ENCODE measurements at regions of chr10 and their contacts with region 1.

Region 1: GRCh38 chr10:4131407-4132228 is 346.6 kb upstream of the KLF6 start:
- DNase-seq: peak; percentile 86
- H3K4me3 ChIP-seq: peak overlapping the region in 1 of 3 experiments; percentile 47
- H3K27ac ChIP-seq: peak overlapping the region; percentile 92
- H3K4me1 ChIP-seq: peaks cover 48% of the 10 kb centered on the region
- H3K27me3 ChIP-seq: no peaks in the 10 kb centered on the region
- CTCF ChIP-seq: no peak
- POLR2A ChIP-seq: no peak

Region 2: GRCh38 chr10:3811291-3811870 is 320.2 kb before region 1 on chr10:
- CTCF ChIA-PET with region 1: no interaction called
- POLR2A ChIA-PET with region 1: no interaction called
- dilution Hi-C with region 1: no loop called
- intact Hi-C with region 1: loop called (anchors 1 kb)
- DNase-seq: peak; percentile 70
- H3K4me3 ChIP-seq: no peak overlapping the region
- H3K27ac ChIP-seq: peak overlapping the region; percentile 100
- H3K4me1 ChIP-seq: peaks cover 55% of the 10 kb centered on the region
- H3K27me3 ChIP-seq: no peaks in the 10 kb centered on the region
- CTCF ChIP-seq: no peak
- POLR2A ChIP-seq: peak; percentile 28

Region 3: GRCh38 chr10:3887885-3888476 is 243.6 kb before region 1 on chr10:
- CTCF ChIA-PET with region 1: no interaction called
- POLR2A ChIA-PET with region 1: no interaction called
- dilution Hi-C with region 1: no loop called
- intact Hi-C with region 1: loop called (anchors 1 kb)
- DNase-seq: peak; percentile 97
- H3K4me3 ChIP-seq: peak overlapping the region in 1 of 3 experiments; percentile 22
- H3K27ac ChIP-seq: peak overlapping the region; percentile 100
- H3K4me1 ChIP-seq: peaks cover 56% of the 10 kb centered on the region
- H3K27me3 ChIP-seq: no peaks in the 10 kb centered on the region
- CTCF ChIP-seq: no peak
- POLR2A ChIP-seq: peak; percentile 65

Region 4: DNA sequence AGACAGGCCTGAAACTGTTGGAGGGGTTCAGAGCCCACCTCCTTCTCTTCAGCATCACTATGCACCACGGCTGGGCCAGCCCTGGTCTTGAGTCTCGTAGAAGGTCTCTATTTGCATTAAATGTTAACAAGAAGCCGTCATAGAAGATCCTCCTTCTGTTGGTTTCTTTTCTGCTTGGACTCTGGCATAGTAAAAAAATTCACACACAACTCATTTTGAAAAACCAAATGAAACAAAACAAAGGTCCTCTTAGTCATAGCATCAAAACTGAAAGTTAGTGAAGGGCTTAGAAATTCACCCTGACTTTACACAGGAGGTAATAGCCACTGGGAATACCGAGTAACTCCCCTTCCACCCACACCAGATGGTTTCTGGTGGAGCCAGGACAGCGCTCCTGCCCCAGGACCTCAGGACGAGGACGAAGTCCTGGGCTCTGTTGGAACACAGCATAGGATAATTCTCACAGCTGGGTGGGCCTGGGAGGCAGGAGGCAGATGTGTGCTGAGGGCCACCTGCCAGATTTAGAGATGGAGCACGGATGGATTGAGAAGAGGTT is 98.2 kb before region 1 on chr10:
- CTCF ChIA-PET with region 1: no interaction called
- POLR2A ChIA-PET with region 1: no interaction called
- dilution Hi-C with region 1: no loop called
- intact Hi-C with region 1: no loop called
- DNase-seq: no peak
- H3K4me3 ChIP-seq: no peak overlapping the region
- H3K27ac ChIP-seq: no peak overlapping the region
- H3K4me1 ChIP-seq: no peaks in the 10 kb centered on the region
- H3K27me3 ChIP-seq: no peaks in the 10 kb centered on the region
- CTCF ChIP-seq: no peak
- POLR2A ChIP-seq: no peak

Region 5: DNA sequence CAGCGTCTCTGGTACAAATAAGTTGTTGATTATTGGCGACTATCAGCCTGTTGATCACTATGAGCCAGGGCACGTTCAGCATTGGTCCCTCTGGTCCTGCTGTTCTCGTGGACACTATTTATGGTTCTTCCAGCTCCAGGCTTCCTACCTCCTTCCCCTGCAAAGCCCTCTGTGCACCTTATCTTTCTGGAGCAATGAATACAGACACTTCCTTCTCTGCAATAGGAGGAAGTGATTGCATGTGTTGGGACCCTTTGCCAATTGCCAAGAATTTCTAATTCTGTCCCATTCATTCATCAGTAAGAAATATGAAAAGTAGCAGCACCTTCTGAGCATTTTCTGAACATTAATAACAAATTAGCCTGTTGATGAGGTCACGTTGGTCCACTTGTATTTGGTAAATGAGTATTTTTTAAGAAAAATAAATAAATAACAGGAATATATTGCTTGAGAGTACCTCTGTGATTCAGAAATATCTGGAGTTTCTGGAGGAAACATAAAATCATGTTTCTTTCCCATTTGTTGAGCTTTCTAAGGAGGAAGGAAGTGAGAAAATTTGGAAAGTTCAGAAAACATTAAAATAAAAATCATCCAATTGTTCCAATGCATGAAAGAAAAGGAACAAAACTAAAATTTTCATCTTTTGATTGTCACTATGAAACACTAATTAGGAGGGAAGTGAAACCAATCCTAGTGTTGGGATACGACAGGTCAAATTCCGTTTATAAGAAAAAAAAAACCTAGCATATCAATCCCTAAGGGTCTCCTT is 87.5 kb before region 1 on chr10:
- CTCF ChIA-PET with region 1: no interaction called
- POLR2A ChIA-PET with region 1: no interaction called
- dilution Hi-C with region 1: no loop called
- intact Hi-C with region 1: loop called (anchors 1 kb)
- DNase-seq: peak; percentile 97
- H3K4me3 ChIP-seq: no peak overlapping the region
- H3K27ac ChIP-seq: peak overlapping the region; percentile 66
- H3K4me1 ChIP-seq: peaks cover 21% of the 10 kb centered on the region
- H3K27me3 ChIP-seq: no peaks in the 10 kb centered on the region
- CTCF ChIP-seq: no peak
- POLR2A ChIP-seq: peak; percentile 67

Region 6: GRCh38 chr10:4353964-4354363 is 222.3 kb after region 1 on chr10:
- CTCF ChIA-PET with region 1: no interaction called
- POLR2A ChIA-PET with region 1: no interaction called
- dilution Hi-C with region 1: no loop called
- intact Hi-C with region 1: loop called (anchors 2 kb)
- DNase-seq: peak; percentile 96
- H3K4me3 ChIP-seq: no peak overlapping the region
- H3K27ac ChIP-seq: peak overlapping the region; percentile 94
- H3K4me1 ChIP-seq: peaks cover 46% of the 10 kb centered on the region
- H3K27me3 ChIP-seq: no peaks in the 10 kb centered on the region
- CTCF ChIP-seq: no peak
- POLR2A ChIP-seq: no peak

Region 7: DNA sequence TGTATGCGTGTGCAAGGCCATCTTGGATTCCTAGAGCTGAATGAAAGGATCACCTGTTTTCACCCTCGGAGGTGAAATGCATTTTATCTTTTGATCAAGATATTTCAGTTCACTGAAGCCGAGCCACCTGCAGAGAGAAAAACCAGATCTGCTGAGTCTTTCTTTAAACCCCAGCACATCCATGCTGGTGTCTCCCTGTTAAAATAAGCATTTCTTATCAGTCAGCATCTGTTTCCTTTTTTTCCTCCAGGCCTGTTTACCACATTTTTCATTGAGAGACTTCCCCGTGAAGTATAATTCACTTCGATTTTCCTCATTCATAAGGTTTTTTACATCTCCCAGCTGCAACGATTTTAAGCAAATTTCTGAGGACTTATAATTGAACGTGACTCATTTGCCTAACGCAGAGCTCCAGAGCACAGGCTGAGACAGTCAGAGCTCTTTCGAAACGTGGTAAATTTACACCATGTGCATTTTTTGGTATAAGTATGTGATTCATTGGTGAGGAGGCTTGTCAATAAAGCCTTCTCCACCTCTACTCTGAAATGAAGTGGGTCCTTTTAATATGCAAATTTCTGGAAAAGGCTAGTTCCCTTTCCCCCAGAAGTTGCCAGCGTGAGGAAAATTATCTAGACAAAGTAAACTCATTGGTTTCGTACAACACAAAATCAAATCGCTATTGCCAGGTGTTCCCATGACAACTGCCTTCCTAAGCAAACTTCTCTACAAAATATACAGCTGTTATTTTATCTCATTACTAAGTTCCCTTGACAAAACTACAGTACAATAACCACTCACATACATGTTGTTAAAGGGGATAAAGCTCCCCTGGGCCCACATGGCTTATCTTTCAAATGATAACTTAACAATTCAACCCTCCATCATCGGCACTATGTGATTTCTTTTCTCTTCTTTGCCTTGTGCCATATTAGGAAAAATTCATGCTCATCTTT is 319.6 kb after region 1 on chr10:
- CTCF ChIA-PET with region 1: no interaction called
- POLR2A ChIA-PET with region 1: no interaction called
- dilution Hi-C with region 1: no loop called
- intact Hi-C with region 1: loop called (anchors 1 kb)
- DNase-seq: peak; percentile 96
- H3K4me3 ChIP-seq: no peak overlapping the region
- H3K27ac ChIP-seq: peak overlapping the region; percentile 85
- H3K4me1 ChIP-seq: peaks cover 23% of the 10 kb centered on the region
- H3K27me3 ChIP-seq: no peaks in the 10 kb centered on the region
- CTCF ChIP-seq: no peak
- POLR2A ChIP-seq: no peak

Region 8: GRCh38 chr10:4656576-4657182 is 525.1 kb after region 1 on chr10:
- CTCF ChIA-PET with region 1: interaction called, 5 read pairs
- POLR2A ChIA-PET with region 1: no interaction called
- dilution Hi-C with region 1: no loop called
- intact Hi-C with region 1: loop called (anchors 5 kb)
- DNase-seq: peak; percentile 80
- H3K4me3 ChIP-seq: no peak overlapping the region
- H3K27ac ChIP-seq: peak overlapping the region; percentile 47
- H3K4me1 ChIP-seq: peaks cover 4% of the 10 kb centered on the region
- H3K27me3 ChIP-seq: no peaks in the 10 kb centered on the region
- CTCF ChIP-seq: peak; percentile 77 to 82
- POLR2A ChIP-seq: no peak

Measured in endothelial cell of umbilical vein (primary cell).